Activated CD4-positive, alpha-beta T cell treated with anti-CD3 and anti-CD28 coated beads for 36 hours (primary cell): ENCODE measurements at regions of chr3 and their contacts with region 1.

Region 1: DNA sequence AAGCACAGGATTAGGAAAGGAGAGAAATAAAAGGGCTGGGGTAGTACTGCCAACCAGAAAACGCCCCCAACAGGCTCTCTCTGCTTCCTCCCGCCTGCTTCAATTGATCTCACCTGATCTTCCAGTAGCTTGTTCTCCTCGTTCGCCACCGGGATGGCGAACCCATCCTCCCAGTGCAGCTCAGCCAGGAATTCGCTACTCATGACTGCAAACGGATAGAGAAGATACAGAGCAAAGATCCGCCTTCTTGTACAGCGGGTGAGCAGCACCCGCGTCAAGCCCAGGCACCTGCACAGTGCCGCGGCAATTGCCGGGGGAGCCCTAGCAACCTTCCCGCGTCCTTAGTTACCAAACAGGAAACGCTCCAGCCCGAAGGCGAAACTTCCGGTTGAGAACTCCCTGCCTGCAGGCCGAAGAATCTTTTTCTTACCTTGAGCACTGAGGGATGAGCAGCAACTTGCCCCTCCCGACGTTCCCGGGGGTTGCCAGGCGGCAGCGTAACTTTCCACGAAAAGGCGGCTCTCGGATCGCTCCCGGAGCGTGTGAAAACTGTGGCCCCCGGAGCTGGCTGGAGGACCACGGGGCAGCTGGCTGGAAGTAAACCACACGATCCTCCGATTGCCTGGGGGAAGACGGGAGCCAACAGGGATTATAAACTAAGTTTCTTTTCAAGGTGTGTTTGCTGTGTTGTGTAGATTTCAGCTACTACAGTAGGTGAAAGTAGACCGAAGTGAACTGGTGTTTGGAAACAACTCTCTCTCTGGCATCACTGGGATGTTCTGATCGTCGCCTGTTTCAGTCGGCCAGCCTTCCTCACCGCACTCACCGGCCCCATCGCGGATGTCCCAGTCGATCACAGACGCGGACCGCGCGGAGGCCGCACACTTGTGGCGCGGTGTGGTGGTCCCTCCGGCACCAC is at the start of gene CCDC39:
- DNase-seq: peak; percentile 80
- ATAC-seq: peak; percentile 87
- H3K4me3 Mint-ChIP-seq: peak within 1 kb of the TSS; percentile 62
- H3K27ac Mint-ChIP-seq: no peak within 1 kb of the TSS
- H3K4me1 Mint-ChIP-seq: peaks cover 13% of the 10 kb centered on the region
- H3K27me3 Mint-ChIP-seq: peaks cover 49% of the 10 kb centered on the region
- total RNA-seq, gene CCDC39: not detected

Region 2: GRCh38 chr3:180223268-180223667 is 456.2 kb before region 1 on chr3:
- CTCF ChIA-PET with region 1: no interaction called
- POLR2A ChIA-PET with region 1: no interaction called
- intact Hi-C with region 1: no loop called
- DNase-seq: no peak
- ATAC-seq: no peak
- H3K4me3 Mint-ChIP-seq: no peak overlapping the region
- H3K27ac Mint-ChIP-seq: no peak overlapping the region
- H3K4me1 Mint-ChIP-seq: no peaks in the 10 kb centered on the region
- H3K27me3 Mint-ChIP-seq: no peaks in the 10 kb centered on the region

Region 3: GRCh38 chr3:180631319-180631718 is 48.1 kb before region 1 on chr3:
- CTCF ChIA-PET with region 1: no interaction called
- POLR2A ChIA-PET with region 1: no interaction called
- intact Hi-C with region 1: loop called in 1 of 2 experiments (anchors 2 kb)
- DNase-seq: no peak
- ATAC-seq: no peak
- H3K4me3 Mint-ChIP-seq: no peak overlapping the region
- H3K27ac Mint-ChIP-seq: no peak overlapping the region
- H3K4me1 Mint-ChIP-seq: peaks cover 21% of the 10 kb centered on the region
- H3K27me3 Mint-ChIP-seq: peaks cover 29% of the 10 kb centered on the region